ENCODE measurements at regions of chr14 and their contacts with region 1.

Region 1: DNA sequence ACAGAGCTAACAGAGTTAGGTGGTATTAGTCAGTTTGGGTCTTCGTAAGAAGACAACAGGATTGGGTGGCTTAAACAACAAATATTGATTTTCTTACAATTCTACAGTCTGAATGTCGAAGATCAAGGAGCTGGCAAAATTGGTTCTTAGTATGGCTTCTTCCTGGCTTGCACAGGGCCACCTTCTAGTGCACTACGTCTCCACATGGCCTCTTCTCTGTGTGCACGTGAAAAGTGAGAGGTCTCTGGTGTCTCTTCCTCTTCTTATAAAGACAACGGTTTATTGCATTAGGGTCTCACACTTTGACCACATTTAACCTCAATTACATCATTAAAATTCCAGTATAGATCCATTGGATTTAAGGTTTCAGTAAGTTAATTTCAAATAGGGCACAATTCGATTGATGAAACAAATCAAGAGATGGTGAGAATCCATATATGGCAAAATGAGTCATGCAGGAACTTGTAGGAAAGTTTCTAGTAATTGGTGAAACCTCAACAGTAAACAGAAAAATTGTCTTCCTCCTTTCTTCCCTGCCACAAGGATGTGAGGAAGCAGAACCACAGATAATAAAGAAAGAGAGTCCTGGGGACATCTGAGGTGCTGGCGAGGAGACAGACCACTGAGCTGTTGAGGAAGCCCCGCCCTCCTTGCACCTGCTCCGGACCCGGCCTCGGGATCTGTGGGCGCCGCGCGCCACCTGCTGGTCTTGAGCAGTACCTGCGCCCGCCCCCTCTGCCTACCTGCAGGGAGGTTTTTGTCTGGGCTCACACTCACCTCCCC is 846.7 kb downstream of the TMEM121 start:
- DNase-seq: peak; percentile 77 to 91 (median 89)
- H3K4me3 ChIP-seq: peak overlapping the region in 3 of 7 experiments; percentile 38 to 48 (median 43)
- H3K27ac ChIP-seq: no peak overlapping the region
- H3K4me1 ChIP-seq: peaks cover 0 to 17% (median 13%) of the 10 kb centered on the region in 4 experiments
- H3K27me3 ChIP-seq: peaks cover 0 to 7% (median 0%) of the 10 kb centered on the region in 5 experiments

Region 2: DNA sequence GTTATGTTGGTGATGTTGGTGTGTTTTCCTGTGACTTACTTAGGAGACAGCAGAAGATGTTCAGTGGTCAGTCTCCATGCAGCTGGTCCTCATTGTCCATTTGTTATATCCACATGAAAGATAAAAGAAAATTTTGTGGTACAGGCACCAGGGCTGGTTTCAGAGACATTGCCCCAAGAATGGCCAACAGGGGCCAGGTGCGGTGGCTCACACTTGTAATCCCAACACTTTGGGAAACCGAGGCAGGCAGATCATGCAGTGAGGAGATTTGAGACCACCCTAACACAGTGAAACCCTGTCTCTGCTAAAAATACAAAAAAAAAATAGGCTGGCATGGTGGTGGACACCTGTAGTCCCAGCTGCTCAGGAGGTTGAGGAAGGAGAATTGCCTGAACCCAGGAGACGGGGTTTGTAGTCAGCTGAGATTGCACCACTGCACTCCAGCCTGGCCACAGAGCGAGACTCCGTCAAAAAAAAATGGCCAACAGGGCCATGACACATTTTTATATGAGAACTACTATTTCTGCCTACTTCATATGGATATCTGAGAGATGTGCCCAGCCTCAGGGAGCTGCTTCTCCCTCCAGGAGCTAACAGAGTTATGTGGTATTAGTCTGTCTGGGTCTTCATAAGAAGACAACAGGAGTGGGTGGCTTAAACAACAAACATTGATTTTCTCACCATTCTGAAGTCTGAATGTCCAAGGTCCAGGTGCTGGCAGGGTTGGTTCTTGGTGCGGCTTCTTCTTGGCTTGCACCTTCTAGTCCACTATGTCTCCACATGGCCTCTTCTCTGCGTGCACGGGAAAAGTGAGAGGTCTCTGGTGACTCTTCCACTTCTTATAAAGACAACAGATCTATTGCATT is 24.9 kb before region 1 on chr14:
- CTCF ChIA-PET with region 1: interaction called, 18 read pairs
- POLR2A ChIA-PET with region 1: no interaction called
- DNase-seq: no peak
- H3K4me3 ChIP-seq: no peak overlapping the region
- H3K27ac ChIP-seq: no peak overlapping the region
- H3K4me1 ChIP-seq: peaks cover 0 to 24% (median 0%) of the 10 kb centered on the region in 4 experiments
- H3K27me3 ChIP-seq: peaks cover 0 to 2% (median 0%) of the 10 kb centered on the region in 5 experiments

Region 3: GRCh38 chr14:106390401-106390800 is 17.3 kb after region 1 on chr14:
- CTCF ChIA-PET with region 1: interaction called, 11 read pairs
- POLR2A ChIA-PET with region 1: interaction called, 3 read pairs
- DNase-seq: no peak
- H3K4me3 ChIP-seq: no peak overlapping the region
- H3K27ac ChIP-seq: no peak overlapping the region
- H3K4me1 ChIP-seq: peaks cover 0 to 2% (median 0%) of the 10 kb centered on the region in 4 experiments
- H3K27me3 ChIP-seq: peaks cover under 1 to 24% (median 3%) of the 10 kb centered on the region in 5 experiments

Region 4: GRCh38 chr14:106518054-106518943 is 145.2 kb after region 1 on chr14:
- CTCF ChIA-PET with region 1: no interaction called
- POLR2A ChIA-PET with region 1: no interaction called
- DNase-seq: peak; percentile 76 to 87 (median 86)
- H3K4me3 ChIP-seq: no peak overlapping the region
- H3K27ac ChIP-seq: no peak overlapping the region
- H3K4me1 ChIP-seq: peaks cover 6 to 17% (median 13%) of the 10 kb centered on the region in 4 experiments
- H3K27me3 ChIP-seq: peaks cover 0 to 42% (median 2%) of the 10 kb centered on the region in 5 experiments

Measured in common myeloid progenitor, CD34-positive (primary cell).